ENCODE measurements at regions of chr6 and their contacts with region 1.

Region 1: GRCh38 chr6:138115877-138116660 is 8.8 kb upstream of the PERP start:
- DNase-seq: peak; percentile 33
- ATAC-seq: peak; percentile 97
- H3K4me3 ChIP-seq: no peak overlapping the region
- H3K27ac ChIP-seq: no peak overlapping the region
- H3K4me1 ChIP-seq: no peaks in the 10 kb centered on the region
- H3K27me3 ChIP-seq: peaks cover 0 to 2% of the 10 kb centered on the region in 2 experiments; a peak in 1 of 4 replicates
- CTCF ChIP-seq: peak; percentile 53 to 86 (median 64); a peak in 5 of 6 replicates
- EP300 ChIP-seq: no peak
- POLR2A ChIP-seq: no peak
- RAD21 ChIP-seq: peak; percentile 82

Region 2: GRCh38 chr6:137631323-137631722 is 484.7 kb before region 1 on chr6:
- CTCF ChIA-PET with region 1: no interaction called
- POLR2A ChIA-PET with region 1: no interaction called
- RAD21 ChIA-PET with region 1: no interaction called
- SMC1A ChIA-PET with region 1: no interaction called
- in situ Hi-C with region 1: no loop called
- intact Hi-C with region 1: no loop called
- DNase-seq: no peak
- ATAC-seq: peak; percentile 81
- H3K4me3 ChIP-seq: no peak overlapping the region
- H3K27ac ChIP-seq: peak overlapping the region; percentile 76
- H3K4me1 ChIP-seq: peaks cover 46% of the 10 kb centered on the region
- H3K27me3 ChIP-seq: no peaks in the 10 kb centered on the region
- CTCF ChIP-seq: no peak
- EP300 ChIP-seq: no peak
- POLR2A ChIP-seq: no peak
- RAD21 ChIP-seq: no peak

Region 3: GRCh38 chr6:138007014-138007472 is 109.0 kb before region 1 on chr6:
- CTCF ChIA-PET with region 1: interaction called, 30 read pairs
- POLR2A ChIA-PET with region 1: no interaction called
- RAD21 ChIA-PET with region 1: interaction called, 5 read pairs
- SMC1A ChIA-PET with region 1: interaction called, 3 read pairs
- in situ Hi-C with region 1: loop called (anchors 5 kb)
- intact Hi-C with region 1: no loop called
- DNase-seq: no peak
- ATAC-seq: peak; percentile 63
- H3K4me3 ChIP-seq: no peak overlapping the region
- H3K27ac ChIP-seq: no peak overlapping the region
- H3K4me1 ChIP-seq: no peaks in the 10 kb centered on the region
- H3K27me3 ChIP-seq: no peaks in the 10 kb centered on the region
- CTCF ChIP-seq: peak; percentile 57 to 78 (median 72)
- EP300 ChIP-seq: no peak
- POLR2A ChIP-seq: no peak
- RAD21 ChIP-seq: peak; percentile 53

Region 4: GRCh38 chr6:138078491-138078890 is 37.6 kb before region 1 on chr6:
- CTCF ChIA-PET with region 1: no interaction called
- POLR2A ChIA-PET with region 1: no interaction called
- RAD21 ChIA-PET with region 1: no interaction called
- SMC1A ChIA-PET with region 1: no interaction called
- in situ Hi-C with region 1: no loop called
- intact Hi-C with region 1: no loop called
- DNase-seq: no peak
- ATAC-seq: no peak
- H3K4me3 ChIP-seq: no peak overlapping the region
- H3K27ac ChIP-seq: no peak overlapping the region
- H3K4me1 ChIP-seq: no peaks in the 10 kb centered on the region
- H3K27me3 ChIP-seq: no peaks in the 10 kb centered on the region
- CTCF ChIP-seq: no peak
- EP300 ChIP-seq: no peak
- POLR2A ChIP-seq: no peak
- RAD21 ChIP-seq: no peak

Region 5: GRCh38 chr6:138226700-138227315 is 110.7 kb after region 1 on chr6:
- CTCF ChIA-PET with region 1: no interaction called
- POLR2A ChIA-PET with region 1: no interaction called
- RAD21 ChIA-PET with region 1: no interaction called
- SMC1A ChIA-PET with region 1: no interaction called
- in situ Hi-C with region 1: no loop called
- intact Hi-C with region 1: no loop called
- DNase-seq: no peak
- ATAC-seq: no peak
- H3K4me3 ChIP-seq: no peak overlapping the region
- H3K27ac ChIP-seq: no peak overlapping the region
- H3K4me1 ChIP-seq: 0 out of 2 replicates have a peak, but pooled peaks cover 2% of the 10 kb centered on the region
- H3K27me3 ChIP-seq: no peaks in the 10 kb centered on the region; a peak in 1 of 4 replicates
- CTCF ChIP-seq: no peak
- EP300 ChIP-seq: no peak
- POLR2A ChIP-seq: no peak
- RAD21 ChIP-seq: no peak

Region 6: GRCh38 chr6:138287144-138287955 is 171.3 kb after region 1 on chr6:
- CTCF ChIA-PET with region 1: interaction called, 74 read pairs
- POLR2A ChIA-PET with region 1: no interaction called
- RAD21 ChIA-PET with region 1: interaction called, 4 read pairs
- SMC1A ChIA-PET with region 1: interaction called, 46 read pairs
- in situ Hi-C with region 1: loop called (anchors 5 kb)
- intact Hi-C with region 1: loop called (anchors 1 kb)
- DNase-seq: no peak
- ATAC-seq: peak; percentile 90
- H3K4me3 ChIP-seq: no peak overlapping the region
- H3K27ac ChIP-seq: no peak overlapping the region
- H3K4me1 ChIP-seq: no peaks in the 10 kb centered on the region
- H3K27me3 ChIP-seq: no peaks in the 10 kb centered on the region
- CTCF ChIP-seq: peak; percentile 60 to 86 (median 81)
- EP300 ChIP-seq: no peak
- POLR2A ChIP-seq: no peak
- RAD21 ChIP-seq: peak; percentile 49

Region 7: DNA sequence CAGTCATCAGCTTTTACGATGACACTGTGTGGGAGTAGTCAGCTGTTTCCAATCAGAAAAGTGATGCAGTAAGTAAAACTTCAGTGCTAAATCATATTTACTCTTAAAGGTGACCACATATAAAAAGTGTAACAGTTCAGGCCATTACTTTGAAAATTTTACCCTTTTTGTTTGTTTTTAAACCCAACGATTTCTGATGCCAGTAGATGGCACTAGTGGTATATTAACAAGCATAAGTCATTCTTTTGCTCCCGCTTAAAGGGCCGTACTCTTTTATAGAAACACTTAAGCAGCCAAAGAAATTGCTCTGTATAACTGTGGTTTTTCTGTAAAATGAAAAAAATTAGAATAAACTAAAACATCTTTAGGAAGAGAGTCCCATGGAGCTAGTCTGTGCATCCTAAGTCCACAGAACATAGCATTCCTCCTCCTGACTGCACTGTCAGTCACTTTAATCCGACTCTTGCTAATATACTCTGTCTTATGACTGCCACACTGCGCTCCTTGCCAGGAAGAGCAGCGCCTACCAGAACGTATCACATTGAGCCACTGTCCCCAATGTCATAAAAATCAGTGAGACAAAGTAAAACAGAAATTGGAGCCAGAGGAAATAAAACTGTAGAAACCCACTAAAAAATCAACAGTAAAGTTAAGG is 313.0 kb after region 1 on chr6:
- CTCF ChIA-PET with region 1: interaction called, 16 read pairs
- POLR2A ChIA-PET with region 1: no interaction called
- RAD21 ChIA-PET with region 1: interaction called, 6 read pairs
- SMC1A ChIA-PET with region 1: interaction called, 5 read pairs
- in situ Hi-C with region 1: no loop called
- intact Hi-C with region 1: loop called (anchors 5 kb)
- DNase-seq: no peak
- ATAC-seq: peak; percentile 80
- H3K4me3 ChIP-seq: no peak overlapping the region
- H3K27ac ChIP-seq: no peak overlapping the region
- H3K4me1 ChIP-seq: no peaks in the 10 kb centered on the region
- H3K27me3 ChIP-seq: no peaks in the 10 kb centered on the region
- CTCF ChIP-seq: peak; percentile 38 to 69 (median 55); a peak in 5 of 6 replicates
- EP300 ChIP-seq: no peak
- POLR2A ChIP-seq: no peak
- RAD21 ChIP-seq: peak; percentile 81

Region 8: GRCh38 chr6:138757136-138757535 is 641.1 kb after region 1 on chr6:
- CTCF ChIA-PET with region 1: no interaction called
- POLR2A ChIA-PET with region 1: no interaction called
- RAD21 ChIA-PET with region 1: no interaction called
- SMC1A ChIA-PET with region 1: interaction called, 5 read pairs
- in situ Hi-C with region 1: loop called (anchors 5 kb)
- intact Hi-C with region 1: no loop called
- DNase-seq: no peak
- ATAC-seq: no peak
- H3K4me3 ChIP-seq: no peak overlapping the region
- H3K27ac ChIP-seq: no peak overlapping the region
- H3K4me1 ChIP-seq: no peaks in the 10 kb centered on the region
- H3K27me3 ChIP-seq: no peaks in the 10 kb centered on the region
- CTCF ChIP-seq: no peak
- EP300 ChIP-seq: no peak
- POLR2A ChIP-seq: no peak
- RAD21 ChIP-seq: no peak

Region 9: DNA sequence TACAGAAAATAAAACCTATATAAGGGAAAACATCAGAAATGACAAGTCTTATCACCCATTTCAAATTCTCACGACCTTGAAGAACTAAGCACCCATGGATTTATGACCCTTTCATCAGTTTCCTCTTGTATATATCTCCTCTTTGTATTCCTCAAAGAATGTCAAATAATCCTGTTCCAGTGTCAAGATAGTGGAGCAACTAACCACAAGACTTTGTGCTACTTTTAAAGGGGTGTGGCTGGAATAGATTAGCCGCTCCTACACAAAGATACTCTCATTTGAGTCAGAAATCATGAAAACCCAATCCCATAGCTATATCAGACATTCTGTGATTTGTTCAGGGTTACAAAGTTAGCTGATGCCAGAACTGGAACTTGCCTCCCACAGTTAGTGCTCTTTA is 865.3 kb after region 1 on chr6:
- CTCF ChIA-PET with region 1: no interaction called
- POLR2A ChIA-PET with region 1: no interaction called
- RAD21 ChIA-PET with region 1: no interaction called
- SMC1A ChIA-PET with region 1: no interaction called
- in situ Hi-C with region 1: no loop called
- intact Hi-C with region 1: no loop called
- DNase-seq: no peak
- ATAC-seq: no peak
- H3K4me3 ChIP-seq: no peak overlapping the region
- H3K27ac ChIP-seq: no peak overlapping the region
- H3K4me1 ChIP-seq: peaks cover 9% of the 10 kb centered on the region; the same call in 1 of the 2 replicates
- H3K27me3 ChIP-seq: no peaks in the 10 kb centered on the region
- CTCF ChIP-seq: no peak
- EP300 ChIP-seq: no peak
- POLR2A ChIP-seq: no peak
- RAD21 ChIP-seq: no peak

Measured in GM12878 (cell line).